Body of pancreas (tissue), 4 donors: ENCODE measurements at regions of chr15 and their contacts with region 1.

Region 1: GRCh38 chr15:55218056-55218455 is 21.3 kb upstream of the RSL24D1 start:
- DNase-seq: no peak
- ATAC-seq: no peak
- H3K4me3 ChIP-seq: no peak overlapping the region
- H3K27ac ChIP-seq: no peak overlapping the region
- H3K4me1 ChIP-seq: peaks cover 4% of the 10 kb centered on the region
- H3K27me3 ChIP-seq: no peaks in the 10 kb centered on the region
- CTCF ChIP-seq: no peak
- POLR2A ChIP-seq: no peak

Region 2: GRCh38 chr15:55108858-55109518 is 109.1 kb before region 1 on chr15:
- intact Hi-C with region 1: no loop called
- DNase-seq: peak; percentile 58 to 69 (median 68)
- ATAC-seq: no peak
- H3K4me3 ChIP-seq: no peak overlapping the region
- H3K27ac ChIP-seq: no peak overlapping the region
- H3K4me1 ChIP-seq: no peaks in the 10 kb centered on the region
- H3K27me3 ChIP-seq: no peaks in the 10 kb centered on the region
- CTCF ChIP-seq: peak in 6 of 7 experiments; percentile 39 to 78 (median 52)
- POLR2A ChIP-seq: no peak

Region 3: DNA sequence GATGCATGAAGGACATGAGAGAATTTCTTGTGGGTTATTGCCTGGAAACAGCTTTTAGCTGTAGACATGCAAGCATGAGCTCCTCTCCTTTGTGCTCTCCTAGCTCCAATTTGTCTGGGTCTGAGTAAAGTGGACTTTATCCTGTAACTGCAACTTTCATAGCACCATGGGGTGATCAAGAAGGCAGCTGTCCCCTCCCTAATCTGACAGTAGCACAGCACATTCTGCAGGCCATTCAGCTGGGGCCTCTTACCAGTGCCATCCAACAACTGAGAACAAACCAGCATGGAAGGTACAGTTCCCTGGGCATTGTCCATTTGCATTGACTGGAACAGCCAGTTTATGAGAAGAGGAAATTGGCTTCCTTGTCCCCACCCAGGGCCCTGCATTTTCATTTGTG is 79.3 kb after region 1 on chr15:
- intact Hi-C with region 1: loop called (anchors 5 kb)
- DNase-seq: no peak
- ATAC-seq: no peak
- H3K4me3 ChIP-seq: no peak overlapping the region
- H3K27ac ChIP-seq: no peak overlapping the region
- H3K4me1 ChIP-seq: no peaks in the 10 kb centered on the region
- H3K27me3 ChIP-seq: no peaks in the 10 kb centered on the region
- CTCF ChIP-seq: no peak
- POLR2A ChIP-seq: no peak

Region 4: DNA sequence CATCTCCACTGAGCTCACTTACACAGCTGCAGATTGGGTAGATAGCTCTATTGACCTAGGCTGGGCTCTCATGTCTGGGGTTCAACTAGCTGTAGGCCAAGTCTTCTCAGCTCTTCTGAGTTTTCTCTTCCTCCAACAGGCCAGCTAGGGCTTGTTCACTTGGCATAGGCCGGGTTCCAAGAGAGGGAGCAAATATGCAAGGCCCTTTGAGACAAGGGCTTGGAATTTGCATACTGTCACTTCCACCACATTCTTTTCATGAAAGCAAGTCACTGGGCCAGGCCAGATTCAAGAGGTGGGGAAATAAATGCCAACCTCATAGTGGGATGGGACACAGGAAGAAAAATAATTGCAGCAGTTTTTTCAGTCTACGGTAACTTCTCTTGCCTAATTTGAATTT is 126.2 kb after region 1 on chr15:
- intact Hi-C with region 1: no loop called
- DNase-seq: no peak
- ATAC-seq: no peak
- H3K4me3 ChIP-seq: no peak overlapping the region
- H3K27ac ChIP-seq: no peak overlapping the region
- H3K4me1 ChIP-seq: no peaks in the 10 kb centered on the region
- H3K27me3 ChIP-seq: no peaks in the 10 kb centered on the region
- CTCF ChIP-seq: no peak
- POLR2A ChIP-seq: no peak

Region 5: DNA sequence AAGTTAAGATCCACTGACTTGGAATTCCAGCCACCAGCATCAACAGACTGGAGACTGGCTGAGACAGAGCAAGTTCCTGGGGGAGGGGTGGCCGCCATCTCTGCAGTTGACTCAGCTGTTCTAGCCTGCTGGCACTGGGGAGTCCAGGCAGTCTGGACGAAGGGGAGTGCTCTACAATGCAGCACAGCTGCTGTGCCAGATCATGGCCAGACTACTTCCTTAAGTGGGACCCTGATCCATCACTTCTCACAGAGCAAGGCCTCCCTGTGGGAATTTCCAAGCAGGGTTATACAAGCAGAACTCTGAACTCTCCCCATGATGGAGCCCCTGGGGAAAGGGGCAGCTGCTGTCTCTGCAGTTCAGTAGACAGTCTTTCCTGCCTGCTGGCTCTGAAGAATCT is 334.9 kb after region 1 on chr15:
- intact Hi-C with region 1: no loop called
- DNase-seq: peak in 1 of 4 donors; percentile 21
- ATAC-seq: no peak
- H3K4me3 ChIP-seq: no peak overlapping the region
- H3K27ac ChIP-seq: no peak overlapping the region
- H3K4me1 ChIP-seq: no peaks in the 10 kb centered on the region
- H3K27me3 ChIP-seq: no peaks in the 10 kb centered on the region
- CTCF ChIP-seq: no peak
- POLR2A ChIP-seq: no peak